ENCODE measurements at regions of chr5 and their contacts with region 1.

Region 1: GRCh38 chr5:93573354-93574351 is 7.4 kb downstream of the NR2F1-AS1 start:
- DNase-seq: no peak
- ATAC-seq: no peak
- H3K4me3 ChIP-seq: peak overlapping the region; percentile 3
- H3K27ac ChIP-seq: peak overlapping the region; percentile 15; the same call in 1 of the 2 replicates
- H3K4me1 ChIP-seq: peaks cover 18% of the 10 kb centered on the region
- H3K27me3 ChIP-seq: no peaks in the 10 kb centered on the region
- CTCF ChIP-seq: no peak
- POLR2A ChIP-seq: no peak
- RAD21 ChIP-seq: no peak

Region 2: GRCh38 chr5:92809855-92810465 is 763.7 kb before region 1 on chr5:
- CTCF ChIA-PET with region 1: no interaction called
- POLR2A ChIA-PET with region 1: no interaction called
- dilution Hi-C with region 1: no loop called
- in situ Hi-C with region 1: no loop called
- intact Hi-C with region 1: loop called (anchors 2 kb)
- DNase-seq: no peak
- ATAC-seq: no peak
- H3K4me3 ChIP-seq: no peak overlapping the region
- H3K27ac ChIP-seq: no peak overlapping the region
- H3K4me1 ChIP-seq: no peaks in the 10 kb centered on the region
- H3K27me3 ChIP-seq: no peaks in the 10 kb centered on the region
- CTCF ChIP-seq: no peak
- POLR2A ChIP-seq: no peak
- RAD21 ChIP-seq: no peak

Region 3: DNA sequence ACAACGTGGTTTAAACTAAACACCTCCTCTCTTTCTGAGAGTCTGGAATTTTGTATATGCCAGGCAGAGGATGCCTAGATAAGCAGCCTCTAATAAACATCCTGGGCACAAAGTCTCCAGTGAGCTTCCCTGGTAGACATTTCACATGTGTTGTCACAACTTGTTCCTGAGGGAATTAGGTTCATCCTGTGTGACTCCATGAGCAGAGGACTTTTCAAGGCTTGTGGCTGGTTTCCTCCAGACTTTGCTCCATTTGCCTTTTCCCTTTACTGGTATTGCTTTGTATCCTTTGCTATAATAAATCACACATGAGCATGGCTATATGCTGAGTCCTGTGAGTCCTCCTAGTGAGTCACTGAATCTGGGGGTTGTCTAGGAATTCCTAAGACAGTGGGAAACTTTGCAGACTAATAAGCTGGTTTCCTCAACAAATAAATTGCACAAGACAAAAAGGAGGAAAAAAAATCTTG is 70.0 kb before region 1 on chr5:
- CTCF ChIA-PET with region 1: no interaction called
- POLR2A ChIA-PET with region 1: no interaction called
- dilution Hi-C with region 1: no loop called
- in situ Hi-C with region 1: no loop called
- intact Hi-C with region 1: loop called (anchors 2 kb)
- DNase-seq: peak; percentile 97
- ATAC-seq: peak; percentile 99
- H3K4me3 ChIP-seq: no peak overlapping the region
- H3K27ac ChIP-seq: peak overlapping the region; percentile 70
- H3K4me1 ChIP-seq: peaks cover 4% of the 10 kb centered on the region
- H3K27me3 ChIP-seq: no peaks in the 10 kb centered on the region
- CTCF ChIP-seq: no peak
- POLR2A ChIP-seq: no peak
- RAD21 ChIP-seq: 0 out of 2 replicates have a peak, but pooled peaks have one; percentile 7

Region 4: DNA sequence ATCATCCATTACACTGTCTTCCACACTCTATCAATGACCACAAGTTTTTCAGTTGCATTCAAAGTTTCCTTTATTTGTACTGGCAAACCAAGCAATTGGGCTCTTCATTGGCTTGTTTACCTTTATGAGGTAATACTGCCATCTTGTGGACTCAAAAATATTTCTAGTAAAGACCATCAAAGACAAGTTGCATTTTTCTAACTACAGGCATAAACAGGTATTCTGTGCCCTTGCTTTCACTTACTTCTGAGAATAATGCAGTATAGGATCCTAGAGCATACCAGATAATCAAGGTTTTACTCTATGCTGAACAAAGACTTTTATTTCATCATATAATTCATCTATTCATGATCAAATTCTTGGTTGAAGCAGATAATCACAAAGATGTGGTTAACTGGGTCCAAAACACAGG is 341.5 kb after region 1 on chr5:
- CTCF ChIA-PET with region 1: no interaction called
- POLR2A ChIA-PET with region 1: no interaction called
- dilution Hi-C with region 1: no loop called
- in situ Hi-C with region 1: no loop called
- intact Hi-C with region 1: no loop called
- DNase-seq: peak; percentile 73
- ATAC-seq: peak; percentile 56; the same call in 1 of the 2 replicates
- H3K4me3 ChIP-seq: no peak overlapping the region
- H3K27ac ChIP-seq: no peak overlapping the region
- H3K4me1 ChIP-seq: no peaks in the 10 kb centered on the region
- H3K27me3 ChIP-seq: no peaks in the 10 kb centered on the region
- CTCF ChIP-seq: peak; percentile 69
- POLR2A ChIP-seq: no peak
- RAD21 ChIP-seq: peak; percentile 75